ENCODE measurements at regions of chr9 and their contacts with region 1.

Region 1: GRCh38 chr9:4762108-4762885 is 21.3 kb upstream of the AK3 start:
- DNase-seq: peak; percentile 72
- H3K4me3 Mint-ChIP-seq: peak overlapping the region; percentile 63
- H3K27ac Mint-ChIP-seq: peak overlapping the region; percentile 78
- H3K4me1 Mint-ChIP-seq: peaks cover 12% of the 10 kb centered on the region
- H3K27me3 Mint-ChIP-seq: peaks cover 9% of the 10 kb centered on the region

Region 2: GRCh38 chr9:4508246-4508906 is 253.9 kb before region 1 on chr9:
- intact Hi-C with region 1: no loop called
- DNase-seq: no peak
- H3K4me3 Mint-ChIP-seq: no peak overlapping the region
- H3K27ac Mint-ChIP-seq: no peak overlapping the region
- H3K4me1 Mint-ChIP-seq: no peaks in the 10 kb centered on the region
- H3K27me3 Mint-ChIP-seq: peaks cover 2% of the 10 kb centered on the region

Region 3: DNA sequence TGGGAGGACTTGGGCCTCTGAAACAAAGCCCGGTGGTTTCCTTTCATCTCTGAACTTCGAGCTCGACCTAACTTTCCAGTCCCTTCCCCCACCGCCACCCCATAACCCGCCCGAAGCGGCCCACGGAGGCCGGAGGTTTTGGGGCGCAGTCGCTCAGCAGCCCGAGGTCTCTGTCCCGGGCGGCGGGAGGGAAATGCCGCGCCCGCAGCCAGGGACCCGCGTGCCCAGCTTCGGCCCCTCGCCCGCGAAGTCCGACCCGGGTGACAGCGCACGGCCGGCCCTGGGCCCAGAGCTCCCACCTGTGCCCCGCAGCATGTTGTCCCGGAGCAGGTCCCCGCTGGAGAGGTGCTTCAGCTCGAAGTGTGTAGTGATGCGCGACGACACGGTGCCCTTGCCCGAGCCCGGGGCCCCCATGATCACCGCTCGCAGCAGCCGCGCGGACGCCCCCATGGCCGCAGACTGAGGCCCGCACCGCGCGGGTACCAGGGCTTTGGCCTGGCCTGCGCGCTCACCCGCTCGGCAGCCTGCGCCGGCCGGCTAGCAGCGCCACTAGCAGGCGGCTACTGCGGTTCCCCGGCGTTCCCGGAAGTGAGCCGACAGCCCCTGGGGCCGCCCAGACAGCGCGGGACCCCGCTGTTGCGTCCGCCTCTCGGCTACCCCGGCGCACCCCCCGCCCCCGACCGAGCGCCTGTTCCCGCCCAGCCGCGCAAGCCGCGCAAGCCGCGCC is 21.5 kb before region 1 on chr9 and contains the start of gene AK3:
- intact Hi-C with region 1: no loop called
- DNase-seq: peak; percentile 85
- H3K4me3 Mint-ChIP-seq: peak within 1 kb of the TSS; percentile 90
- H3K27ac Mint-ChIP-seq: peak within 1 kb of the TSS; percentile 89
- H3K4me1 Mint-ChIP-seq: peaks cover 29% of the 10 kb centered on the region
- H3K27me3 Mint-ChIP-seq: no peaks in the 10 kb centered on the region
- total RNA-seq, gene AK3: 33.9 and 34.5 TPM in 2 replicates

Region 4: GRCh38 chr9:4832786-4833579 is 70.7 kb after region 1 on chr9:
- intact Hi-C with region 1: loop called (anchors 2 kb)
- DNase-seq: peak; percentile 27
- H3K4me3 Mint-ChIP-seq: no peak overlapping the region
- H3K27ac Mint-ChIP-seq: peak overlapping the region; percentile 93
- H3K4me1 Mint-ChIP-seq: peaks cover 47% of the 10 kb centered on the region
- H3K27me3 Mint-ChIP-seq: no peaks in the 10 kb centered on the region

Region 5: DNA sequence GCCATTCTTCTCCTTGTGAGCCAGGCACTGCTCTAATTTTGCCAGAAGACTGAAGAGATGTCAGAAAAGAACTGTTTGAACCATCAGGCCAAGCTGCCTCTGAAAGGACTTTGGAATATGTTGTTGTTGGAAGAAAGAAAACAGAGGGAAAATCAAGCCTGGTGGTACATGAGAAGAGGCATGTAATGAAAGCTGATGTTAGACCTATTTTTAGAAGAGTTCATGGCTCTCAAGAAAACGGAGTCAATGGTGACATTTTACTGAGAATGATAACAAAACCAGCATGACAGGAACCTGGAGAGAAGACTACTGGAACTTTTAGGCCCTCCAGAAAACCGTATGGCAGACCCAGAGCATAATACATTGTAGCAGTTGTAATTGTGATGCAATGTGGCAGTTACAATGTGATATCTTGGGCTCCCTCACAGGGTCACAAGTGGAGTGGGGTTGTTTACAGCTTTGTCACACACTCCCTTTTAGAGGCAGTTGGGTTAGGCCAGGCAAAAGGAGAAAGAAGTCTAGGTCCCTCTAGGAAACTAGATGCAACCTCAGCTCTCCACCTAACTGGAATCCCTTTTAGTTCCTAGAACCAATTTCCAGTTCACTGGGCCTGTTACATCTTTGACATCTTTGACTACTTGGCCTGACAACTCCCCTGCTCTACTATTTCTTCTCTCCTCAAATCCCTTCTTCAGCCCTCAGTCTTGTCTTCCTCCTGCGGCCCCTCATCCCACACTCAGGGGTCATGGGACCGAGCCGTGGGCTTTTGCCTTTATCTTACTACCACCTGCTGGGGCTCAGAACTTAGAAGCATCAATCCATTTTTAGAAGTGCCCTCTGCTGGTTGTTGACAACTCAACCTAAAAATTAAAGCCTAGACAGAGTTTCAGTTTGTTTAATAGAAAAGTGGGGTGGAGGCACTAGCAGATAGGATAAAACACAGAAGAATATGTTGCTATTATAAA is 161.6 kb after region 1 on chr9:
- intact Hi-C with region 1: loop called (anchors 2 kb)
- DNase-seq: no peak
- H3K4me3 Mint-ChIP-seq: no peak overlapping the region
- H3K27ac Mint-ChIP-seq: peak overlapping the region; percentile 83
- H3K4me1 Mint-ChIP-seq: peaks cover 48% of the 10 kb centered on the region
- H3K27me3 Mint-ChIP-seq: no peaks in the 10 kb centered on the region

Region 6: DNA sequence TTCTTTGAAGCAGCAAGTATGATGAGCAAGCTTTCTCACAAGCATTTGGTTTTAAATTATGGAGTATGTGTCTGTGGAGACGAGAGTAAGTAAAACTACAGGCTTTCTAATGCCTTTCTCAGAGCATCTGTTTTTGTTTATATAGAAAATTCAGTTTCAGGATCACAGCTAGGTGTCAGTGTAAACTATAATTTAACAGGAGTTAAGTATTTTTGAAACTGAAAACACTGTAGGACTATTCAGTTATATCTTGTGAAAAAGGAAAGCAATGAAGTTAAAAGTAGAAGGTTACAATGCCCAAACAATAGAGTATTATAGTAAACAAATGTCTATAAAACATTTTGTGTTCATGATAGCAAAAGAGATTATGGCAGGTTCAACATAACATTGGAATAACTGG is 311.4 kb after region 1 on chr9:
- intact Hi-C with region 1: loop called (anchors 5 kb)
- DNase-seq: no peak
- H3K4me3 Mint-ChIP-seq: no peak overlapping the region
- H3K27ac Mint-ChIP-seq: peak overlapping the region; percentile 4
- H3K4me1 Mint-ChIP-seq: peaks cover 17% of the 10 kb centered on the region
- H3K27me3 Mint-ChIP-seq: no peaks in the 10 kb centered on the region

Region 7: GRCh38 chr9:5425006-5425628 is 662.8 kb after region 1 on chr9:
- intact Hi-C with region 1: loop called (anchors 1 kb)
- DNase-seq: no peak
- H3K4me3 Mint-ChIP-seq: no peak overlapping the region
- H3K27ac Mint-ChIP-seq: no peak overlapping the region
- H3K4me1 Mint-ChIP-seq: peaks cover 9% of the 10 kb centered on the region
- H3K27me3 Mint-ChIP-seq: no peaks in the 10 kb centered on the region

Region 8: GRCh38 chr9:5596173-5596572 is 833.9 kb after region 1 on chr9:
- intact Hi-C with region 1: loop called (anchors 2 kb)
- DNase-seq: no peak
- H3K4me3 Mint-ChIP-seq: no peak overlapping the region
- H3K27ac Mint-ChIP-seq: no peak overlapping the region
- H3K4me1 Mint-ChIP-seq: peaks cover 32% of the 10 kb centered on the region
- H3K27me3 Mint-ChIP-seq: peaks cover 2% of the 10 kb centered on the region